Right ventricle myocardium inferior (tissue), 1 donor: ENCODE measurements at regions of chr2 and their contacts with region 1.

Region 1: DNA sequence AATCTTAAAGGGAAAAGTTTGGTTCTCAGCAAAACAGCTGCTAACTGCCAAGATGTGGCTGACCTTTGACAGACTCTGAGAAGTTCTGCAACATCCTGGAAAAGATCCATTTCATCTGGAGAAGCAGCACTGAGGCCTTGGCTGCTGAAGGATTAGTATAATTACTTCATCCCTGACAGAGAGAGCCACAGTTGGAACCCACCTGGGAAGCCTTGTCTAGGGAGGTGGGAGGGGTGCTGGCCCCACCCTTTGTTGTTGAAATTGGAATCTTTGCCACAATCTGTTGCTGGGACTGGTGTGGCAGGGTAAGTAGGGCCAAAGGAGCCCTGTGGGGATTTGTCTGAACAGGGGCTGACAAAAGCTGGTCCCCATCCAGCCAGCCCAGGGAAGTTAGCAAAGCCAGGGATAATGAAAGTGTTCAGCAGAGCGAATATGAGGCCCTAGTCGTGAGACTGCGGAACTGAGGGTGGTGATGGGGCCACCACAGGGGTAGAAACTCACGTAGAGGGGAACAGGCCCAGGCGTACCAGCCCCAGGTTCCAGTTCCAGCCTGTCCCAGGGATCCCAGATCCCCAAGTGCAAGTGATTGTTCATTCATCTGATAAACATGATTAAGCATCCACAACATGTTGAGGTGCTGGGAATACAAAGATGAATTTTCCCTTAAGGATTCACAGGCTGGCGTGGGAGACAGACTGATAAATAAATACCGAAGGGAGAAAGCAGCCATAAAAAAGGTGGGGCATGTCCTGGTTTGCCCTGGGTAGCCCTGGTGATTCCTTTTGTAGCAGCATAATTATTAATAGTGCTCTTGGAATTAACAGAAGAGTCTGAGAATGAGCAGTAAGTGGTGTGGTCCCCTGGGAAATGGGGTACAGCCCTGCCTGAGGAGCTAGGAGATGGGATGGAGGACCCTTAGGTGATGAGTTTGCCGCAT is 60.0 kb downstream of the MYO1B start:
- DNase-seq: peak; percentile 85
- ATAC-seq: peak; percentile 95

Region 2: DNA sequence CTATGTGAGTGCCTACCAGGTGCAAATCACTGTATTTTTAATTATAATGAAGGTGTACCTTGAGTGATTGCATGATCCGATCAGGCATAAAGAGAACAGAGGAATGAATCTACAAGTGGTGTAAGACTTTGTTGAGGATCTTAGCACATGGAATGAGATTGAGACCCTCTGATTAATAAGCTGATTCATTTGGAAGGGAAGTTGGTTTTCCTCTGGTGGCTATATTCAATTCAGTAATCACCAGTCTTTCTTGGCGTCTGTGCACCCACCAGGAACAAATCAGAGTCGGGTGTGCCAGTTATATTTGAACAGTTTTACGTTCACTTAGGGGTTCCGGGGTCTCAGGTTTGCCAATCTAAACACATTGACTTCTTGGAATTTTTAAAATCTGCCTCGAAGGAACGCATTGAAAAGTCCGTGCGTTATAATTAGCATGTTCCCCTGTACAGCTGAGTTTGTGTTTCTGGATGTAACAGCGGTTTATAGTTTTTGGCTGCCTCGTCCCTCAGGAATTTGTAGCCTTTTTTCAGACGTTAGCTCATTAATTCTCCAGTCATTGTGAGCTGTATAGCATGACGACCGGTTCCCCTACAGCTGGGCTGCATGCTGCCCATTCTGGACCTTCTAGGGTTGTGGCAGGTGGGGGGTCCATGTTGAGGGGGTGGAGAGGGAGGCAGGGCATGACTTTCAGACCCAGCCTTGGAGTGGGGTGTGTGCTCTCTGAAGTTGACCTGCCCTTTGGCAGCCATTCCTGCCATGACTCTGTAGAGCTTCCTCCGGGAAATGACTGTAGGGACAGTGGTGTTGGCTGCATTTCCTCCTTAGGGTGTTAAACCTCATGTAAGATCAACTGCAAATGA is 39.7 kb before region 1 on chr2:
- intact Hi-C with region 1: loop called (anchors 5 kb)
- DNase-seq: no peak
- ATAC-seq: peak; percentile 40